ENCODE measurements at regions of chr5 and their contacts with region 1.

Region 1: DNA sequence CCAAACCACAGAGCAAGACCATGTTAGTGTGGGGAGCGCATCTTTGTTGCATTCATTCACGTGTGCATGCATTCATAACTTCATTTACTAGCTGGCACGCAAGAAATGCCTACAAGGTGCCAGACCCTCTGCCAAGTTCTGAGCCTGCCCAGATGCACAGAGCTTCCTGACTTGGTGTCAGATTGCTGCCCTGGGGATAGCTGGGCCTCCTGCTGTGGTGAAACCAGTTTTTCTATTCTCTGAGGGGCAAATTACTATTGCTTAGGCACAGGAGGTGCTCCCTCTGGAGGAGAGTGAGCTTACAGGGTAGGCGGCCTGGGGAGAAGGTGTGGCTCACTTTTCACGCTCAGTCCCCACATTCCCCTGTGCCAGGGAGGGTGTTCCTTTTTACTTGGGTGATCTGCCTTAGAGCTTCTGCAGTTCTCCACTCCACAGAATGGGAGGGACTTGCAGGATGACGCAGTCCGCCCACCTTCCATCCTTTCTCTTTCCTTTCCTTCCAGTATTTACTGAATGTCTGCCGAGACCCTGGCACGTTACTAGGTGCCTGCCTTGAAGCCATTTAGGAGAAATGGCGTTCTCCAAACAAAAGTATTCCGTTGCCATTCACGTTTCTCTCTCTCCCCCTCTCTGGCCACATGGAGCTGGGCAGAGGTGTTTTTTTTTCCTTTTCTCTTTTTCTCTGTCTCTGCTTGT is 27.9 kb upstream of the CTNNA1 start:
- DNase-seq: peak; percentile 94 to 99
- H3K4me3 ChIP-seq: peak overlapping the region; percentile 17; the same call in 1 of the 2 replicates
- H3K27ac ChIP-seq: peak overlapping the region; percentile 74
- H3K4me1 ChIP-seq: peaks cover 55% of the 10 kb centered on the region
- H3K27me3 ChIP-seq: no peaks in the 10 kb centered on the region
- CTCF ChIP-seq: peak; percentile 70

Region 2: GRCh38 chr5:138610918-138611677 is 114.2 kb before region 1 on chr5:
- CTCF ChIA-PET with region 1: interaction called, 4 read pairs
- POLR2A ChIA-PET with region 1: no interaction called
- intact Hi-C with region 1: loop called (anchors 1 kb)
- DNase-seq: no peak
- H3K4me3 ChIP-seq: no peak overlapping the region
- H3K27ac ChIP-seq: no peak overlapping the region
- H3K4me1 ChIP-seq: peaks cover 35% of the 10 kb centered on the region
- H3K27me3 ChIP-seq: no peaks in the 10 kb centered on the region
- CTCF ChIP-seq: no peak

Region 3: DNA sequence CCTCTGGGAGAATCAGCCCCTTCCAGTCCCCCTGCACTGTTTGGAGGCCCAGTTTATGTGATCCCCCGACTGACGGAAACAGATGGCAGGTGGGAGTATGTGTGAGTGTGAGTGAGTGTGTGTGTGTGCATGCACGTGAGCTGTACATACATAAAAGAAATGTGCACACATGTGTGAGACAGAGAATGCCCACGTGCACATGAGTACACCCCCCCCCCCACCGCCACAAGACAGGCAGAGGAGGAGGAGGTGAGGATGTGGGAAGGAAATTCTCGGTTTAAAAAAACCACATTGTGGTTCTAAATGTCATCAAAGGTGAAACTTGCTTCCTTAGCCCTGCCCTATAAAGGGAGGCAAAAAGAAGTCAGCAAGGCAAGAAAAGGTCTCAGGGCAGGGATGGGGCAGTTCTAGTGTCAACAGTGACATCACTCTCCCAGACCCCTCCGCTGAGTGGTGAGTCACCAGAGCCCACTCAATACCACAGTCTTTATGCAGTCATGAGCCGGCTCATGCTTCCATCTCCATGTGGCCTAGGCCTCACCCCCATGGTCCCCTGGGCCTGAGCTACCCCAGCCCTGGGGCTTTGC is 70.9 kb before region 1 on chr5:
- CTCF ChIA-PET with region 1: interaction called, 4 read pairs
- POLR2A ChIA-PET with region 1: interaction called, 3 read pairs
- intact Hi-C with region 1: loop called (anchors 1 kb)
- DNase-seq: peak; percentile 37 to 64
- H3K4me3 ChIP-seq: no peak overlapping the region
- H3K27ac ChIP-seq: 0 out of 2 replicates have a peak overlapping the region, but pooled peaks have one; percentile 18
- H3K4me1 ChIP-seq: peaks cover 20% of the 10 kb centered on the region
- H3K27me3 ChIP-seq: no peaks in the 10 kb centered on the region
- CTCF ChIP-seq: no peak

Region 4: GRCh38 chr5:138696503-138697191 is 28.6 kb before region 1 on chr5:
- CTCF ChIA-PET with region 1: no interaction called
- POLR2A ChIA-PET with region 1: interaction called, 19 read pairs
- intact Hi-C with region 1: no loop called
- DNase-seq: peak; percentile 44 to 50
- H3K4me3 ChIP-seq: no peak overlapping the region
- H3K27ac ChIP-seq: no peak overlapping the region
- H3K4me1 ChIP-seq: peaks cover 23% of the 10 kb centered on the region
- H3K27me3 ChIP-seq: no peaks in the 10 kb centered on the region
- CTCF ChIP-seq: no peak

Region 5: DNA sequence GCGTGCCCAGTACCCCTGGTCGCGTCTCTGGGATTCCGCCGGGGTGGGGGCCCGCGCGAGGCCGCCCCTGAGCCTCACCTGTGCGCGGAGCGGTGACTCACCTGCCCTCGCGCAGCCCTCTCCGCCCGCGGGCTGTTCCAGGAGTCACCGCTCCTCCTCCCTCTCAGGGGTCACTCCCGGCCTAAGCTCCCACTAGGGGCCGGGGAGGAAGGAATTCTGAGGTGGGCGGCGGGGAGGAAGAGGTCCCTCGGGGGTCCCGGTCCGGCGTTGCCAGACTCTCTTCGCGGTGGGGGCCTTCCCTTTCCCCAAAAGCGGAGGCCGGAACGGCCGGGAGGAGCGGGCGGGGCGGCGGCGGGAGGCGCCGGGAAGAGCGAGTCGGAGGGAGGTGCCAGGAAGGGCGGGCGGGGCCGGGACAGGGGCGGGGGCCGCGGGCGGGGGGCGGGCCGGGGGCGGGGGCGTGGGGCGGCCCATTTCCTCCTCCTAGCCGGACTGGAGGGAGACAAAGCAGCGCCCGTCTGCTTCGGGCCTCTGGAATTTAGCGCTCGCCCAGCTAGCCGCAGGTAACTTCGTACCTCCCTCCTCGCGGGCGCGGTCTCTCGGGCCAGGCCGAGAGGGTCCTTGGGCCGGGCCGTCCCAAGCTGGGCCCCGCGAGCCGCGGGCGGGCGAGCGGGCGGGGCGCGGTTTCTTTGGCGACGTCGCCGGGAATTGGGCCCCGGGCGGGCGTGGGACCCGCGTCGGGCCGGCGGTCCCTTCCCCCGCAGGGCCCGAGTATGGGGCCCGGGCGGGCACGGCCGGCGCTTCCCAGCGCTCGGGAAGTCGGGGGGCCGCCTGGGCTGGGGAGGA is 27.9 kb after region 1 on chr5 and contains the start of gene CTNNA1:
- CTCF ChIA-PET with region 1: interaction called, 6 read pairs
- POLR2A ChIA-PET with region 1: interaction called, 4 read pairs
- intact Hi-C with region 1: loop called (anchors 1 kb)
- DNase-seq: peak; percentile 70 to 89
- H3K4me3 ChIP-seq: peak within 1 kb of the TSS; percentile 60
- H3K27ac ChIP-seq: peak within 1 kb of the TSS; percentile 74
- H3K4me1 ChIP-seq: peaks cover 30% of the 10 kb centered on the region
- H3K27me3 ChIP-seq: no peaks in the 10 kb centered on the region
- CTCF ChIP-seq: no peak
- total RNA-seq, gene CTNNA1: 91.7 and 94.0 TPM in 2 replicates

Measured in PC-9 (cell line).